Activated CD4-positive, alpha-beta memory T cell treated with anti-CD3 and anti-CD28 coated beads for 36 hours (primary cell): ENCODE measurements at regions of chr5 and their contacts with region 1.

Region 1: DNA sequence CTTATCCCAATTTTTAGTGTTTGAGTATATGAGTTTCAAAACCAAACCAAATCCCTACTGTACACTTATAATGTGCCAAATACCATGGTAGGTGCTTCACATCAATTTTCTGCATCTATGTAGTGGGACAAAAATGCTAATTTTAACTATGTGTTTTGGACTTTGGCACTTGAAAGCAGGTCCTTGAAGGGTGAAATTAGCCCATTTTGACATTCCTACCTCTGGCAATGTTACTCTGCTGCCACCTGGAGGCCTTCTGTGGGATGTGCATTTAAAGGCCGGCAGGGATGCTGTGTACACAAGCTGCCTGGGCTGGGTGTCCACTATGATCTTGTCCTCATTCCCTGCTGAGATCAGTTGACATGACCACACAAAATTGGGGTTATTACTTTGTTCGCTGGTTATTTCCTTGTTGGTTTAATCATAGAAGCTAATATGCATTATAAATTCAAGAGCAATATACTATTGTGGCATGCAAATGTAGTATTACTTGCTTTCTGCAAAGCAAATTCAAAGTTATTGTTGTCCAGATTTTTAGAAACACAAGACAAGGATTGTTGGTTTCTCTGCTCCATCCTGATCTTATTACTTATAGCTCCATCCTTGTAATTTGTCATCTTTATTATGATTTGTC is 166.8 kb downstream of the ARHGEF28 start:
- DNase-seq: peak; percentile 75
- H3K4me3 Mint-ChIP-seq: no peak overlapping the region
- H3K27ac Mint-ChIP-seq: no peak overlapping the region
- H3K4me1 Mint-ChIP-seq: peaks cover 6% of the 10 kb centered on the region
- H3K27me3 Mint-ChIP-seq: peaks cover 18% of the 10 kb centered on the region

Region 2: DNA sequence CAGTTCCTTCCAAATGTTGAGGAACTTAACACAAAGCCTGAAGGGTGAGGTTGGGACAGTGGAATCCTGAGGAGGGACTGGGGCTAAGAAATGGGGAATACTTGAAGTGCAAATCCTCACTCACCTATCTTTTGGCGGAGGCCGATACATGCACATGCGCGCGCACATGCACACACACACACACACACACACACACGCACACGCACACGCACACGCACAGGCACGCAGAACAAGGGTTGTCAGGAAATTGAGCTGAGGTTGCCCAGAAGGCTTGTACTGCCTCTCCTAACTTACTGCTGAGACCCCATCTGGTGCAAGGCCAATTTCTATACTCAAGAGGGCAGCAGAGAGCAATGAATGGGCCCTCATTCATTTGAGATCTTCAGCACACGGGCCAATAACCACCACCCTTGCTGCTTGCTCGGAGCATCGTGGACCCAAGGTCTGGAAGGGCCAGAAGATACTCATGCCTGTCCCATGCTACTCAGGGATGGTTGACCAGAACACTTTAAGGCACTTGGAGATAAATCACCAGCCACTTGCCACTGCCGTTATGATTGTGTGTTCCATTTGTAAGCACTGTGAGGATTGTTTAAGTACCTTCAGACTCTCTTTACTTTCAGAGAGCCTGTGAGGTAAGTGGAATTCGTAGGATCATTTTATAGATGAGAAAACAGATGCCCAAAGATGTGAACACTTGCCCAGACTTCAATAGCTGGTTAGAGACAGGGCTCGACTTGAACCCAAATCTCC is 273.1 kb before region 1 on chr5:
- CTCF ChIA-PET with region 1: interaction called, 4 read pairs
- POLR2A ChIA-PET with region 1: no interaction called
- intact Hi-C with region 1: loop called (anchors 5 kb)
- DNase-seq: peak; percentile 78
- H3K4me3 Mint-ChIP-seq: no peak overlapping the region
- H3K27ac Mint-ChIP-seq: peak overlapping the region; percentile 28
- H3K4me1 Mint-ChIP-seq: peaks cover 7% of the 10 kb centered on the region
- H3K27me3 Mint-ChIP-seq: no peaks in the 10 kb centered on the region

Region 3: DNA sequence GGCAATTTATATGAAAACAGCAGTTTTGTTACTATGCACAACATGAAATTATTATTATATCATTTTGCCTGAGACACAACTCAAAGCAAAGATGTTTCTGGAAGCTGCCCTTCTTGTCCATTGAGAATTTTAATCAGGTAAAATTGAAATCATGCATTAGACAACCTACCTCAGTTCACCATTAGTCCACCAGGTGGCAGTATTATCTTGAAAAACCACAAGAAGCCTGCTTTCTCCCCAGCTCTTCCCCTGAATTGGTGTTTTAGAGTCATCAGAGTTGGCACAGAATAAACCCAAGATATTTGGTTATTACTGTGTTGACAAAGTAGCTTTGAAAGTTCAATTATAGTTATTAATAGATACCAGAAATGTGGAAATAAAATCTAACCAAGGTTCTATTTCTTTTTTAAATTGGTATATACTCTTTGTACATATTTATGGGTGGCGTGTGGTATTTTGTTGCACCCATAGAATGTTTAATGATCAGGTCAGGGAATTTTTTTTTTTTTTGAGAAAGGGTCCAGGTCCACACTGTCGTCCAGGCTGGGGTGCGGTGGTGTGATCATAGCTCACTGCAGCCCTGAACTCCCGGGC is 201.6 kb before region 1 on chr5:
- CTCF ChIA-PET with region 1: interaction called, 255 read pairs
- POLR2A ChIA-PET with region 1: no interaction called
- intact Hi-C with region 1: loop called (anchors 1 kb)
- DNase-seq: peak; percentile 13
- H3K4me3 Mint-ChIP-seq: no peak overlapping the region
- H3K27ac Mint-ChIP-seq: no peak overlapping the region
- H3K4me1 Mint-ChIP-seq: no peaks in the 10 kb centered on the region
- H3K27me3 Mint-ChIP-seq: peaks cover 2% of the 10 kb centered on the region

Region 4: GRCh38 chr5:73596705-73597328 is 196.0 kb before region 1 on chr5:
- CTCF ChIA-PET with region 1: interaction called, 255 read pairs
- POLR2A ChIA-PET with region 1: no interaction called
- intact Hi-C with region 1: no loop called
- DNase-seq: no peak
- H3K4me3 Mint-ChIP-seq: no peak overlapping the region
- H3K27ac Mint-ChIP-seq: no peak overlapping the region
- H3K4me1 Mint-ChIP-seq: no peaks in the 10 kb centered on the region
- H3K27me3 Mint-ChIP-seq: peaks cover 7% of the 10 kb centered on the region

Region 5: GRCh38 chr5:73687357-73687756 is 105.4 kb before region 1 on chr5:
- CTCF ChIA-PET with region 1: no interaction called
- POLR2A ChIA-PET with region 1: no interaction called
- intact Hi-C with region 1: loop called (anchors 10 kb)
- DNase-seq: no peak
- H3K4me3 Mint-ChIP-seq: no peak overlapping the region
- H3K27ac Mint-ChIP-seq: no peak overlapping the region
- H3K4me1 Mint-ChIP-seq: no peaks in the 10 kb centered on the region
- H3K27me3 Mint-ChIP-seq: no peaks in the 10 kb centered on the region

Region 6: DNA sequence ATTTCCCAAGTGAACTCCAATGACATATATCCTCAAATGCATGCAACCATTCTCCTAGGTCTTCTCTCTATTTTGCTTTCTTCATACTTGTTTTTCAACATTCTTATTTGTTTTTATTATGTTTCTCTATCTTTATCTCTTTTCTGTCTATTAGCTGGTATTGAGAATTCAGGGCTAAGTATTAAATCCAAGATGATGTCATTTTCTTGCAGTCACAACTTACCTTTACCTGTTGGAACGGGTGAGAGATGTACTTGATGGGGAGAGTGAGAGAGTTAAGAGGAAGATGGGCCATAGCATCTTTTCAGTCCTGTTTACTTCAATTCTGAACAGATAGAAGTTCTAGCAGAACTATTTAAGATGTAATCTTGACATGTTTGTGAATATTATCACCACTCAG is 79.6 kb before region 1 on chr5:
- CTCF ChIA-PET with region 1: no interaction called
- POLR2A ChIA-PET with region 1: no interaction called
- intact Hi-C with region 1: no loop called
- DNase-seq: no peak
- H3K4me3 Mint-ChIP-seq: no peak overlapping the region
- H3K27ac Mint-ChIP-seq: no peak overlapping the region
- H3K4me1 Mint-ChIP-seq: no peaks in the 10 kb centered on the region
- H3K27me3 Mint-ChIP-seq: peaks cover 18% of the 10 kb centered on the region